BJ (cell line): ENCODE measurements at regions of chr5 and their contacts with region 1.

Region 1: GRCh38 chr5:54844905-54845566 is 140.4 kb downstream of the ESM1 start:
- DNase-seq: no peak
- H3K4me3 ChIP-seq: no peak overlapping the region
- H3K27me3 ChIP-seq: no peaks in the 10 kb centered on the region
- CTCF ChIP-seq: peak; percentile 29; the same call in 1 of the 2 replicates

Region 2: GRCh38 chr5:54713923-54714581 is 131.0 kb before region 1 on chr5:
- CTCF ChIA-PET with region 1: interaction called, 4 read pairs
- POLR2A ChIA-PET with region 1: interaction called, 17 read pairs
- DNase-seq: no peak
- H3K4me3 ChIP-seq: no peak overlapping the region
- H3K27me3 ChIP-seq: no peaks in the 10 kb centered on the region
- CTCF ChIP-seq: no peak

Region 3: GRCh38 chr5:54743997-54744788 is 100.8 kb before region 1 on chr5:
- CTCF ChIA-PET with region 1: interaction called, 23 read pairs
- POLR2A ChIA-PET with region 1: no interaction called
- DNase-seq: peak; percentile 98
- H3K4me3 ChIP-seq: no peak overlapping the region
- H3K27me3 ChIP-seq: no peaks in the 10 kb centered on the region
- CTCF ChIP-seq: no peak

Region 4: DNA sequence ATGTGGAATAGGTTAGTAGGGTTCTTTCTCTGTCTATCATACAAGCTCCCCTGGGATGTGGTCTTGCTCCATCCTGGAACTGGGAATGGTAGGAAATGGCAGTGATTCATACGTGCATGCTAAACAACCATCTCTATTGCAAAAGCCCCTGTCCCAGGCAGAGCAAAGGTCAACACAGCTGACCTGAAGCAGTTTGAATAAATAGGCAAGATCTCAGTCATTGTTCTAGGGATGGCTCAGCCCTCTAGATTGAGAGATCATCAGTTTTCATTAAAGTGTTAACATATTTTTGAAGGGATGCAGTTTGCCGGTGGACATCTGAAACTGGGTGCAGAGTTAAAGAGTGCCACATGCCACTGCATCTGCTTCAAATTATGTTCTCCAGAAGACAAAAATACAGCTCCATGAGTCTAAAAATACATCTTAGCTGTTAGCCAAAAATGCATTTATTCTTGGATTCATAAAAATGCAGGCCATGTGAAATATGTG is 83.8 kb before region 1 on chr5:
- CTCF ChIA-PET with region 1: interaction called, 12 read pairs
- POLR2A ChIA-PET with region 1: no interaction called
- DNase-seq: peak; percentile 93
- H3K4me3 ChIP-seq: no peak overlapping the region
- H3K27me3 ChIP-seq: no peaks in the 10 kb centered on the region
- CTCF ChIP-seq: no peak

Region 5: GRCh38 chr5:54861212-54861894 is 16.3 kb after region 1 on chr5:
- CTCF ChIA-PET with region 1: interaction called, 17 read pairs
- POLR2A ChIA-PET with region 1: no interaction called
- DNase-seq: no peak
- H3K4me3 ChIP-seq: no peak overlapping the region
- H3K27me3 ChIP-seq: no peaks in the 10 kb centered on the region
- CTCF ChIP-seq: no peak

Region 6: DNA sequence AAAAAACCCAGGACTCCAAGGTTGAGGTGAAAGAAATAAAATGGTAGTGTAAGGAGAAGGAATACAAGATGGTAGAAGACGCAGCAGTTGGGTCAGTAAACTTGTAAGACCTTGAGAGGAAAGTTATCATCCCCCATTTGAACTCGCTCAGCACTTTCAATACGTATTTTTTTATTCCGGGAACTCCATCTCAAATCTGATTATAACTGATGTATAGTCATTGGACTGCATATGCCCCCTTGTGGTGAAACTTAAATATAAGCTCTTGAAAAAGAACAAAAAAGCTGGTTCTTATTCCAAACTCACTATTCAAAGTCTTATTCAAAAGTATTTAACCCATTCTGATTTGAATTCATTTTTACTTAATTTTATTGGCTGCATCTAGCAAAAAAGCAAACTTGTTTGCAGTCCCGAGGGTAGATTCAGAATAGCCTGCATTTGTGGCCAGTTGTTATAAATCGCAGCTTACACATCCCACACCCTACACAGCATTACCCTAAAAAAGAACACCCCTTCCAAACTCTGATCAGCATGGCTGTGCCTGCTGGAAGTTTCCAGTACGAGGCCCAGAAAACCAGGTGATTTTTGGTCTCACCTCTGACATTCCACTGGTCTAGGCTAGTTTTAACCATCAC is 22.4 kb after region 1 on chr5:
- CTCF ChIA-PET with region 1: interaction called, 17 read pairs
- POLR2A ChIA-PET with region 1: no interaction called
- DNase-seq: no peak
- H3K4me3 ChIP-seq: no peak overlapping the region
- H3K27me3 ChIP-seq: peaks cover 2% of the 10 kb centered on the region; the same call in 1 of the 2 replicates
- CTCF ChIP-seq: peak; percentile 55